ENCODE measurements at regions of chr20 and their contacts with region 1.

Region 1: DNA sequence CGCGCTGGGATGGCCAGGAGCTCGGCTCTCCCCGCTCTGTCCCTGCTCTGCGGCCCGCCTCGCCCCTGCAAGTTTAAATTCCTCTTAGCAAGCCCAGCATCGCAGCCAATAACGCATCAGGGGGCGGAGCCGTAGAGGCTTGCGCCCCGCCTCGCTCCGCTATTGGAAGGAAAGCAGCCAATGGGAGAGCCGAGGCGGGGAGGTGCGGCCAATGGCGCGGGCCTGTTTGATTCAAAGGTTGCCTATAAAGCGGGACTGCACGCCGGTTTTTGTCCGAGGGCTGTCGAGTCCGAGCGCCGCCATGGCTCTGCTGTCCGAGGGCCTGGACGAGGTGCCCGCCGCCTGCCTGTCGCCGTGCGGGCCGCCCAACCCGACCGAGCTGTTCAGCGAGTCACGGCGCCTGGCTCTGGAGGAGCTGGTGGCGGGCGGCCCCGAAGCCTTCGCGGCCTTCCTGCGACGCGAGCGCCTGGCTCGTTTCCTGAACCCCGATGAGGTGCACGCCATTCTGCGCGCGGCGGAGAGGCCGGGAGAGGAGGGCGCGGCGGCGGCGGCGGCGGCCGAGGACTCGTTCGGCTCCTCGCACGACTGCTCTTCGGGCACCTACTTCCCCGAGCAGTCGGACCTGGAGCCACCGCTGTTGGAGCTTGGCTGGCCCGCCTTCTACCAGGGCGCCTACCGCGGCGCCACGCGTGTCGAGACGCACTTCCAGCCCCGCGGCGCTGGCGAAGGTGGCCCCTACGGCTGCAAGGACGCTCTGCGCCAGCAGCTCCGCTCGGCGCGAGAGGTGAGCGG is at the start of gene FAM83D:
- DNase-seq: peak; percentile 97 to 98
- H3K4me3 ChIP-seq: peak within 1 kb of the TSS; percentile 69
- H3K27ac ChIP-seq: no peak within 1 kb of the TSS
- H3K4me1 ChIP-seq: peaks cover 35% of the 10 kb centered on the region
- H3K27me3 ChIP-seq: peaks cover 5% of the 10 kb centered on the region
- CTCF ChIP-seq: no peak; the same call in 1 of the 2 replicates
- total RNA-seq, gene FAM83D: 44.6 and 57.3 TPM in 2 replicates

Region 2: DNA sequence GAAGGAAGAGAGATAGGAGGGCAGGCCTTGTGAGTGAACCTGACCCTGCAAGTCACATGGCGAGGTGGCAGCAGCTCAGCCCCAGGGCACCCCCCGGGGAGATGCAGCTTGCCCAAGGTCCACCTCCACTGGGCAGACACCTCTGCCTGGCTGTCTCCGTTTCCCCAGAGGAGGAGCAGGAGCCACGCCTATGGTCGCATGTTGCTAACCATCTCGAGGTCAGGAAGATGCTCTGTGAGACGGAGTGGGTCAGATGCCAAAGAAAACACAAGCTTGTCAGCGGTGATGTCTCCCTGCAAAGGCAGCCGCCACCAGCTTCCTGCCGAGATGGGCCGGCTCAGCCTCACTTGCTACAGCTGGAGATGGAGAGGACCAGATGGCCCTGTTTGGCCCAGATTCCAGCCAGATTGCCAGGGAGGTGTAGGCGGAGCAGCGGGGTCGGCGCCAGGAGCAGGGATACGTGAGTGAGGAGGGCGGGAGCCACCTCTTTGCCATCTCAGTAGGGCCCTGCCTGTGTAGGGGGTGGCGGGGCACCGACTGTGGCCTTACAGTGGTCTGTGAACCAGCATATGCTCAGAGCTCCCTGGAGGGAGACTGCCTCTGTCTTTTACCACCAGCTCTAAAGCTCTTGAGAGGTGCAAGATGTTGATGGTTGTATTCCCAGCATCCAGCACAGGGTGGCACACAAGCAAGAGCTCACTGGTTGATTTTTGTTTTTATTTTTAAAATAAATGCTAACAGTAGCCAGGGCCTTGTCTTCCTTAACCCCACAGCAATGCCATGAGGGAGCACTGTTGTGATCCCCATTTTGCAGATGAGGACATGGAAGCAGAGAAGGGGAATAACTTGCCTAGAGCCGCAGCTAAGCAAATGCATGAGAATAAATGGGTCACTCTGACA is 43.0 kb before region 1 on chr20:
- CTCF ChIA-PET with region 1: interaction called, 13 read pairs
- POLR2A ChIA-PET with region 1: no interaction called
- intact Hi-C with region 1: no loop called
- DNase-seq: peak in 1 of 2 experiments; percentile 30
- H3K4me3 ChIP-seq: no peak overlapping the region
- H3K27ac ChIP-seq: no peak overlapping the region
- H3K4me1 ChIP-seq: no peaks in the 10 kb centered on the region
- H3K27me3 ChIP-seq: peaks cover 10% of the 10 kb centered on the region
- CTCF ChIP-seq: no peak

Region 3: GRCh38 chr20:38962044-38962927 is 35.9 kb after region 1 on chr20 and contains the start of gene DHX35:
- CTCF ChIA-PET with region 1: interaction called, 5 read pairs
- POLR2A ChIA-PET with region 1: no interaction called
- intact Hi-C with region 1: loop called (anchors 1 kb)
- DNase-seq: peak; percentile 92 to 99
- H3K4me3 ChIP-seq: peak within 1 kb of the TSS; percentile 81
- H3K27ac ChIP-seq: peak within 1 kb of the TSS; percentile 82
- H3K4me1 ChIP-seq: peaks cover 18% of the 10 kb centered on the region
- H3K27me3 ChIP-seq: no peaks in the 10 kb centered on the region
- CTCF ChIP-seq: peak; percentile 40; the same call in 1 of the 2 replicates
- total RNA-seq, gene DHX35: 12.1 and 12.6 TPM in 2 replicates